ENCODE measurements at regions of chr5 and their contacts with region 1.

Region 1: GRCh38 chr5:134304311-134304710 is 62.7 kb downstream of the CDKL3 start:
- DNase-seq: no peak
- H3K4me3 ChIP-seq: no peak overlapping the region
- H3K4me3 Mint-ChIP-seq: no peak overlapping the region
- H3K27ac Mint-ChIP-seq: no peak overlapping the region
- H3K4me1 ChIP-seq: peaks cover 16% of the 10 kb centered on the region
- H3K4me1 Mint-ChIP-seq: peaks cover 12% of the 10 kb centered on the region
- H3K27me3 ChIP-seq: no peaks in the 10 kb centered on the region
- H3K27me3 Mint-ChIP-seq: no peaks in the 10 kb centered on the region
- CTCF ChIP-seq: no peak

Region 2: DNA sequence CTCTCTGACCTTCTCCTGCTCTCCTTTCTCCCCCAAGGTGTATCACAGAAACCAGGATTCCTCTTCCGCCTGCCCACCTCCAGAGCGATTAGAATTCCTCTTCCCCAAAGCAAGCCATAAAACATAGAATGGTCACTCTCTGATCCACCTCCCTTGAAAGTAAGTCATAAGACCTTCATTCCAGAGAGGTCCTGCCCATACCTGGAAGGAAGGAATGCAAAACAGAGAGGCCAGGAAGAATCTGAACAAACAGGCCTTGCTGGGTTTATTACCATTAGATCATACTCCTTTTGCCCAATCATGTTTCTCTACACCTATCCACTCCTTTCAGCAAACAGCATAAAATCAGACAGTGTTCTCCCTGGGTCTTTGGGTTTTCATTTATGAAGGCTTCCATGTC is 41.7 kb after region 1 on chr5:
- CTCF ChIA-PET with region 1: no interaction called
- POLR2A ChIA-PET with region 1: no interaction called
- intact Hi-C with region 1: loop called (anchors 1 kb)
- DNase-seq: peak; percentile 90
- H3K4me3 ChIP-seq: no peak overlapping the region
- H3K4me3 Mint-ChIP-seq: peak overlapping the region; percentile 25
- H3K27ac Mint-ChIP-seq: peak overlapping the region; percentile 79
- H3K4me1 ChIP-seq: peaks cover 38% of the 10 kb centered on the region
- H3K4me1 Mint-ChIP-seq: peaks cover 20% of the 10 kb centered on the region
- H3K27me3 ChIP-seq: no peaks in the 10 kb centered on the region
- H3K27me3 Mint-ChIP-seq: no peaks in the 10 kb centered on the region
- CTCF ChIP-seq: no peak

Region 3: DNA sequence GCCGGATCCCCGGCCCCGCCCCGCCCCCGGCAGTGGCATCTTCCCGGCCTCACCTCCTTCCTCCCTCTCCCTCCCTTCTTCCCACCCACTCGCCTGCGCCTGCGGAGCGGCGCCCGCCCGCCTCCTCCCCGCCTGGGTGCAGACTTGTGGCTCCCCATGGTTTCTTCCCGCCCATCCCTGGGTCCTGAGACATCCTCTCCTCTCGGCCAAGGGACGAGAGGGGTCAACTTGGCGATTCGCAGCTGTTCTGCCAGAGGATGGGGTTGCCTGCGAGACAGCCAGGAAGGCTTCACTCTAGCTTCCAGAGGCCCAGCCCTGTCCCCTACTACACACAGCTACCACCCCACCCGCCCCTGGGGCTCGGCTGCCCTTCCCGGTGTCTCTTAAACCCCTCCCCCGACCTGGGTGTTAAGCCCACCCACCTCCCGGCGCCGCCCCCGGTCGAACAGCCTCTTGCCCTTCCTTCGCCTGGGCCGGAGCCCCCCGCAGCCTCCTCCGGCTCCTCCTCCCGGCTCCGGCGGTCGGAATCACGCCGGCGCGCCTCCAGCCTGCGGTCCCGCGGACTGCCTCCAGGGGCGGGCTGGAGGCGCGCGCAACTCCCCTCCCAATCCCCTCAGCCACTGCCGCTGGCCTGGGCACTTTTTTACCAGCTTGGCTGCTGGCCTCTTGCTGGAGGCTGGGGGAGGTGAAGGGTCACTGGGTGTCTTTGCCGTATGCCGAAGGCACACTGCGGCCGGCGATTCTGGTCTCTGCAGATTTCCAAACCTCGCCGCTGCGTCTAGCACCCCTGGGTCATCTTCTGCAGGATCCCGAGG is 223.0 kb after region 1 on chr5:
- CTCF ChIA-PET with region 1: no interaction called
- POLR2A ChIA-PET with region 1: no interaction called
- intact Hi-C with region 1: loop called (anchors 5 kb)
- DNase-seq: peak; percentile 89 to 94
- H3K4me3 ChIP-seq: peak overlapping the region; percentile 92
- H3K4me3 Mint-ChIP-seq: peak overlapping the region; percentile 96
- H3K27ac Mint-ChIP-seq: peak overlapping the region; percentile 92
- H3K4me1 ChIP-seq: peaks cover 31% of the 10 kb centered on the region
- H3K4me1 Mint-ChIP-seq: peaks cover 8% of the 10 kb centered on the region
- H3K27me3 ChIP-seq: no peaks in the 10 kb centered on the region
- H3K27me3 Mint-ChIP-seq: no peaks in the 10 kb centered on the region
- CTCF ChIP-seq: peak; percentile 76 to 79

Region 4: DNA sequence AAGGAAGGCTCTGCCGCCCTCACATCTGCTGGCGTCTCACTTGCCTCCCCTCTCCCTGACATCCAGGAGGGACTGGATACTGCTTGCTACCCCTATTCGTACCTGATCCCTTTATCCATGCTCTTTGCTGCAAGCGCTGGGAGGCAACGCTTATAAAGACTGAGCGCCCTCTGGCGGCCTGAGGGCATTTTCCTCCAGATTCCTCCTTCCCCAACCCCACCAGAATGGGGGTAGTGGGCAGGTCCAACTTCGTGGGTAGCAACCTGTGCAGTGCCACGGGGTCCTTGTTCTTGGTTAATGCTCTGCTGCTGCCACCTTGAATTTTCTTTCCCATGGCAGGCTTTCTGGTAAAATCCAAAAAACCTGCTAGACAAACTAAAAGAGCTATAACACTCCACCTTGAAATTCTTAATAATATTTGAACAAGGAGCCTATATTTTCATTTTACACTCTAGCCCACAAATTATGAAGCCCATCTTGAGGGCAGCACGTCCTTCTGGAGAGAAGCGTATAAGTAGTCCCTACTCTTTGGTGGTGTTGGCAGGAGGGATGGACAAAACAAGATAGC is 273.6 kb after region 1 on chr5:
- CTCF ChIA-PET with region 1: no interaction called
- POLR2A ChIA-PET with region 1: no interaction called
- intact Hi-C with region 1: loop called (anchors 1 kb)
- DNase-seq: peak; percentile 74 to 79
- H3K4me3 ChIP-seq: no peak overlapping the region
- H3K4me3 Mint-ChIP-seq: no peak overlapping the region
- H3K27ac Mint-ChIP-seq: no peak overlapping the region
- H3K4me1 ChIP-seq: no peaks in the 10 kb centered on the region
- H3K4me1 Mint-ChIP-seq: no peaks in the 10 kb centered on the region
- H3K27me3 ChIP-seq: no peaks in the 10 kb centered on the region
- H3K27me3 Mint-ChIP-seq: no peaks in the 10 kb centered on the region
- CTCF ChIP-seq: peak; percentile 77 to 81

Measured in Caco-2 (cell line).